ENCODE measurements at regions of chr6 and their contacts with region 1.

Region 1: GRCh38 chr6:25490018-25490801 is 161.8 kb upstream of the SCGN start:
- DNase-seq: peak; percentile 37 to 81 (median 65)
- ATAC-seq: peak; percentile 71
- H3K4me3 ChIP-seq: no peak overlapping the region
- H3K4me3 Mint-ChIP-seq: no peak overlapping the region
- H3K27ac ChIP-seq: no peak overlapping the region
- H3K27ac Mint-ChIP-seq: no peak overlapping the region
- H3K4me1 ChIP-seq: peaks cover 5% of the 10 kb centered on the region
- H3K4me1 Mint-ChIP-seq: peaks cover 7% of the 10 kb centered on the region
- H3K27me3 ChIP-seq: no peaks in the 10 kb centered on the region
- H3K27me3 Mint-ChIP-seq: no peaks in the 10 kb centered on the region
- CTCF ChIP-seq: peak; percentile 91

Region 2: GRCh38 chr6:25112207-25112874 is 377.9 kb before region 1 on chr6:
- CTCF ChIA-PET with region 1: no interaction called
- POLR2A ChIA-PET with region 1: no interaction called
- intact Hi-C with region 1: no loop called
- DNase-seq: no peak
- ATAC-seq: no peak
- H3K4me3 ChIP-seq: no peak overlapping the region
- H3K4me3 Mint-ChIP-seq: no peak overlapping the region
- H3K27ac ChIP-seq: no peak overlapping the region
- H3K27ac Mint-ChIP-seq: no peak overlapping the region
- H3K4me1 ChIP-seq: no peaks in the 10 kb centered on the region
- H3K4me1 Mint-ChIP-seq: peaks cover 2% of the 10 kb centered on the region
- H3K27me3 ChIP-seq: no peaks in the 10 kb centered on the region
- H3K27me3 Mint-ChIP-seq: no peaks in the 10 kb centered on the region
- CTCF ChIP-seq: no peak

Region 3: GRCh38 chr6:25156096-25156495 is 334.1 kb before region 1 on chr6:
- CTCF ChIA-PET with region 1: no interaction called
- POLR2A ChIA-PET with region 1: no interaction called
- intact Hi-C with region 1: no loop called
- DNase-seq: no peak
- ATAC-seq: no peak
- H3K4me3 ChIP-seq: no peak overlapping the region
- H3K4me3 Mint-ChIP-seq: no peak overlapping the region
- H3K27ac ChIP-seq: no peak overlapping the region
- H3K27ac Mint-ChIP-seq: no peak overlapping the region
- H3K4me1 ChIP-seq: no peaks in the 10 kb centered on the region
- H3K4me1 Mint-ChIP-seq: no peaks in the 10 kb centered on the region
- H3K27me3 ChIP-seq: no peaks in the 10 kb centered on the region
- H3K27me3 Mint-ChIP-seq: peaks cover 4% of the 10 kb centered on the region
- CTCF ChIP-seq: no peak

Region 4: GRCh38 chr6:25263657-25264056 is 226.6 kb before region 1 on chr6:
- CTCF ChIA-PET with region 1: interaction called, 161 read pairs
- POLR2A ChIA-PET with region 1: interaction called, 5 read pairs
- intact Hi-C with region 1: loop called (anchors 1 kb)
- DNase-seq: no peak
- ATAC-seq: no peak
- H3K4me3 ChIP-seq: no peak overlapping the region
- H3K4me3 Mint-ChIP-seq: no peak overlapping the region
- H3K27ac ChIP-seq: no peak overlapping the region
- H3K27ac Mint-ChIP-seq: no peak overlapping the region
- H3K4me1 ChIP-seq: no peaks in the 10 kb centered on the region
- H3K4me1 Mint-ChIP-seq: peaks cover 2% of the 10 kb centered on the region
- H3K27me3 ChIP-seq: no peaks in the 10 kb centered on the region
- H3K27me3 Mint-ChIP-seq: peaks cover 2% of the 10 kb centered on the region
- CTCF ChIP-seq: no peak

Region 5: GRCh38 chr6:25278914-25279747 is 211.1 kb before region 1 on chr6 and contains the start of gene CARMIL1:
- CTCF ChIA-PET with region 1: interaction called, 157 read pairs
- POLR2A ChIA-PET with region 1: interaction called, 20 read pairs
- intact Hi-C with region 1: loop called (anchors 1 kb)
- DNase-seq: peak; percentile 28 to 85 (median 68)
- ATAC-seq: peak; percentile 71
- H3K4me3 ChIP-seq: peak within 1 kb of the TSS; percentile 55 to 73
- H3K4me3 Mint-ChIP-seq: peak within 1 kb of the TSS; percentile 94
- H3K27ac ChIP-seq: peak within 1 kb of the TSS in 1 of 2 experiments; percentile 54
- H3K27ac Mint-ChIP-seq: peak within 1 kb of the TSS; percentile 88
- H3K4me1 ChIP-seq: peaks cover 18% of the 10 kb centered on the region
- H3K4me1 Mint-ChIP-seq: peaks cover 37% of the 10 kb centered on the region
- H3K27me3 ChIP-seq: no peaks in the 10 kb centered on the region
- H3K27me3 Mint-ChIP-seq: peaks cover 3% of the 10 kb centered on the region
- CTCF ChIP-seq: peak; percentile 65
- total RNA-seq, gene CARMIL1: 5.0 to 6.1 TPM

Region 6: GRCh38 chr6:25369433-25370181 is 120.6 kb before region 1 on chr6:
- CTCF ChIA-PET with region 1: interaction called, 26 read pairs
- POLR2A ChIA-PET with region 1: interaction called, 8 read pairs
- intact Hi-C with region 1: loop called in 1 of 2 experiments (anchors 2 kb)
- DNase-seq: peak in 6 of 9 experiments; percentile 8 to 56 (median 34)
- ATAC-seq: peak; percentile 16
- H3K4me3 ChIP-seq: peak overlapping the region in 1 of 2 experiments; percentile 10
- H3K4me3 Mint-ChIP-seq: peak overlapping the region; percentile 85
- H3K27ac ChIP-seq: peak overlapping the region; percentile 11 to 28
- H3K27ac Mint-ChIP-seq: peak overlapping the region; percentile 94
- H3K4me1 ChIP-seq: peaks cover 48% of the 10 kb centered on the region
- H3K4me1 Mint-ChIP-seq: peaks cover 81% of the 10 kb centered on the region
- H3K27me3 ChIP-seq: no peaks in the 10 kb centered on the region
- H3K27me3 Mint-ChIP-seq: no peaks in the 10 kb centered on the region
- CTCF ChIP-seq: no peak

Region 7: DNA sequence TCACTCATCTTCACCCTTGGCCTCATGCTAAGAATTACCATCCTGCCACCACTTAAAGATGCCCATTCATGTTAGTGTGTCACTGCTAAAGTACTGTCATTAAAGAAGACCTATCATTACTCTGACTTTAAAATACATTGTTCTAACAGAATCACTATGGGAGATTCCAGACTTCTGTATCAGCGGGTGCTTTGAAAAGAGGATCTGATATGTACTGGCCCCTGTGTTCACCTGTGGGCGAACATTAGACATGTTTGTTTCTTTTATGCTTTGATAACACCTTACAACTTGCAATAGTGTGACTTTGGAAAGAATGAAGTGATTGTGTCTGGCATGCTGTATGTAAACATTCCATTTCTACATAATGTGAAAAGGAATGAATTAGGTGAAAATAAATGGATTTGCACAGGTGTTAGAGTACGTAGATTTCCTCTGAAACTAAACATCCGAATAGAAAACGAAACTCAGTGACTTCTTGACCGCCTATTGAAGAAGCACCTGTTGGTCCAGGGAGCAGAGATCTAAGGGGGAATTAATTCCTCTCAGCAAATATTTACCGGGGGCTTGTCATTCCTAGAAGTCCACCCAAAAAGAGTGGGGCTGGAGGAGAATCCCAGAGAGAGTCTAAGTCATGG is 78.8 kb before region 1 on chr6:
- CTCF ChIA-PET with region 1: no interaction called
- POLR2A ChIA-PET with region 1: no interaction called
- intact Hi-C with region 1: no loop called
- DNase-seq: no peak
- ATAC-seq: no peak
- H3K4me3 ChIP-seq: no peak overlapping the region
- H3K4me3 Mint-ChIP-seq: no peak overlapping the region
- H3K27ac ChIP-seq: no peak overlapping the region
- H3K27ac Mint-ChIP-seq: no peak overlapping the region
- H3K4me1 ChIP-seq: peaks cover 46% of the 10 kb centered on the region
- H3K4me1 Mint-ChIP-seq: peaks cover 53% of the 10 kb centered on the region
- H3K27me3 ChIP-seq: no peaks in the 10 kb centered on the region
- H3K27me3 Mint-ChIP-seq: no peaks in the 10 kb centered on the region
- CTCF ChIP-seq: no peak

Region 8: GRCh38 chr6:25511376-25511775 is 21.2 kb after region 1 on chr6:
- CTCF ChIA-PET with region 1: interaction called, 16 read pairs
- POLR2A ChIA-PET with region 1: no interaction called
- intact Hi-C with region 1: no loop called
- DNase-seq: no peak
- ATAC-seq: no peak
- H3K4me3 ChIP-seq: no peak overlapping the region
- H3K4me3 Mint-ChIP-seq: no peak overlapping the region
- H3K27ac ChIP-seq: no peak overlapping the region
- H3K27ac Mint-ChIP-seq: no peak overlapping the region
- H3K4me1 ChIP-seq: no peaks in the 10 kb centered on the region
- H3K4me1 Mint-ChIP-seq: no peaks in the 10 kb centered on the region
- H3K27me3 ChIP-seq: no peaks in the 10 kb centered on the region
- H3K27me3 Mint-ChIP-seq: no peaks in the 10 kb centered on the region
- CTCF ChIP-seq: no peak

Region 9: GRCh38 chr6:25601800-25602673 is 111.8 kb after region 1 on chr6:
- CTCF ChIA-PET with region 1: interaction called, 4 read pairs
- POLR2A ChIA-PET with region 1: no interaction called
- intact Hi-C with region 1: loop called in 1 of 2 experiments (anchors 5 kb)
- DNase-seq: peak in 2 of 9 experiments; percentile 59 to 72
- ATAC-seq: no peak
- H3K4me3 ChIP-seq: no peak overlapping the region
- H3K4me3 Mint-ChIP-seq: no peak overlapping the region
- H3K27ac ChIP-seq: no peak overlapping the region
- H3K27ac Mint-ChIP-seq: no peak overlapping the region
- H3K4me1 ChIP-seq: no peaks in the 10 kb centered on the region
- H3K4me1 Mint-ChIP-seq: peaks cover 3% of the 10 kb centered on the region
- H3K27me3 ChIP-seq: no peaks in the 10 kb centered on the region
- H3K27me3 Mint-ChIP-seq: no peaks in the 10 kb centered on the region
- CTCF ChIP-seq: peak; percentile 81

Region 10: GRCh38 chr6:25697537-25698345 is 207.5 kb after region 1 on chr6:
- CTCF ChIA-PET with region 1: no interaction called
- POLR2A ChIA-PET with region 1: no interaction called
- intact Hi-C with region 1: no loop called
- DNase-seq: no peak
- ATAC-seq: no peak
- H3K4me3 ChIP-seq: no peak overlapping the region
- H3K4me3 Mint-ChIP-seq: no peak overlapping the region
- H3K27ac ChIP-seq: no peak overlapping the region
- H3K27ac Mint-ChIP-seq: no peak overlapping the region
- H3K4me1 ChIP-seq: no peaks in the 10 kb centered on the region
- H3K4me1 Mint-ChIP-seq: no peaks in the 10 kb centered on the region
- H3K27me3 ChIP-seq: no peaks in the 10 kb centered on the region
- H3K27me3 Mint-ChIP-seq: peaks cover 16% of the 10 kb centered on the region
- CTCF ChIP-seq: no peak

Measured in CD8-positive, alpha-beta T cell (primary cell).